Activated CD4-positive, alpha-beta T cell treated with anti-CD3 and anti-CD28 coated beads, Interleukin-2, amount 10 ng/mL, durations not matched to agents 24 days and 14 days (primary cell): ENCODE measurements at regions of chr16 and their contacts with region 1.

Region 1: GRCh38 chr16:67279296-67280089 is at the start of gene PLEKHG4:
- DNase-seq: peak; percentile 95
- H3K4me3 Mint-ChIP-seq: peak within 1 kb of the TSS; percentile 89
- H3K27ac Mint-ChIP-seq: peak within 1 kb of the TSS; percentile 90
- H3K4me1 Mint-ChIP-seq: peaks cover 18% of the 10 kb centered on the region
- H3K27me3 Mint-ChIP-seq: no peaks in the 10 kb centered on the region
- total RNA-seq, gene PLEKHG4: 43.4 and 43.8 TPM in 2 replicates

Region 2: DNA sequence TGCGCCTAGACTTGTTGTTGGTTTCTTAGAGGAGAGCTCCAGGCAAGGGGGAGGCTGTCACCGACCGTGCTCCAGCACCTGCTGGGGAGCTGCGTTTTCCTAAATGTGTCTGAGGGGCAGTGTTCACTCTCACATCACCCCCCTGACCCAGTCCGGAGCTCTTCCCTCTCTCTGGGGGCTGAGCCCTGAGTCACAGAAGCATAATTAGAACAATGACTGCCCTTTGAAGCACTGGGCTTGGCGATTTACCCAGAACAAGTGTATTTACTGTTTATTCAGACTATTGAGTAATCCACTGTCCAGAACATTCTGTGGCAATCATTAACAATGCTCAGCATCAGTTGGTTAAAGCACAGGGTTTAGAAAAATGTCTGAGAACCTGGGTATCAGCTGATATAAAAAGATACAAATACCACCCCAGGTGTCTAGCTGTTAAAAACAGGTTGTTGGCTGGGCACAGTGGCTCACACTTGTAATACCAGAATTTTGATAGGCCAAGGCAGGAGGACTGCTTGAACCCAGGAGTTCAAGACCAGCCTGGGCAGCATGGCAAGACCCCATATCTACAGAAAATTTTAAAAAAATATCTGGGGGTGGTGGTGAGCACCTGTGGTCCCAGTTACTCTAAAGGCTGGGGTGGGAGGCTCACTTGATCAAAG is 283.0 kb before region 1 on chr16:
- intact Hi-C with region 1: no loop called
- DNase-seq: no peak
- H3K4me3 Mint-ChIP-seq: no peak overlapping the region
- H3K27ac Mint-ChIP-seq: no peak overlapping the region
- H3K4me1 Mint-ChIP-seq: peaks cover 17% of the 10 kb centered on the region
- H3K27me3 Mint-ChIP-seq: no peaks in the 10 kb centered on the region

Region 3: DNA sequence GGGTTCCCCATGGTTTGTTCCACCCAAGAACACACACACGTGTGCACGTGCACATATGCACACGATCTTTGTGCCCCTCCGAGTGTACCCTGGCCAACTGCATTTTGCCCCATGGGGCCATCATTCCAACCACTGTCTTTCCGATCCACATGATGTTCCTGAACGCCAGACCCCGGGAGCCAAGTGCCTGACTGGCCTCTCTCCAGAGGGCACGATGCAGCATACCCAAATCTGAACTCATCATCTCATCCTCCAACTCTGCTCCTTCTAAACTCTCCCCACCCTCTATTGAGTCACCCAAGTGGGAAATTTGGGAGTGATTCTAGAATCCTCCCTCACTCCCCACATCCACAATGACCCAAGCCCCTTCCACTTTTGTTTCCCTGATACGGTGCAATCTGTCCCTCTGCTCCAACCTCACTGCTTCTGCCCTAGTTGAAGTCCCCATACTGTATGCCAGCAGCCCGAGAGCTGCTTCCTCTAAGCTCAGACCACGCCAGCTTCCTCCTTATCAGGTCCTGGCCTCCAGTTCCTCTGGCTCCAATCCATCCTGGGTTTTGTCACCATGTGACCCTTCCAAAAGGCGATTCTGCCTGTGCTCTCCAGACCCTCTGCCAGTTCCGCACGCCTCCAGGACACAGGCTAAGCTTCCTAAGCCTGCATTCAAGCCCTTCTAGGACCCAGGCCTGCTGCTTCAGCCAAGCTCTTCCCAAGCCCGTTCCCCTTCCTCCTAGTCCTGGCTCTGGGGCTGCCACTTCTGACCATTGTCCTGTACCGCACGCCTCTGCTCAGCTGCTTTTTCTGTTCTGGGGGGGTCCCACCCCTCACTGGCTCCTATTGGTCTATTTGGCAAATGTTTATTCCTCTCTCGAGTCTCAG is 62.6 kb before region 1 on chr16:
- intact Hi-C with region 1: no loop called
- DNase-seq: no peak
- H3K4me3 Mint-ChIP-seq: no peak overlapping the region
- H3K27ac Mint-ChIP-seq: no peak overlapping the region
- H3K4me1 Mint-ChIP-seq: peaks cover 8% of the 10 kb centered on the region
- H3K27me3 Mint-ChIP-seq: no peaks in the 10 kb centered on the region

Region 4: GRCh38 chr16:67399181-67399733 is 119.8 kb after region 1 on chr16:
- intact Hi-C with region 1: loop called (anchors 5 kb)
- DNase-seq: peak; percentile 87
- H3K4me3 Mint-ChIP-seq: no peak overlapping the region
- H3K27ac Mint-ChIP-seq: no peak overlapping the region
- H3K4me1 Mint-ChIP-seq: peaks cover under 1% of the 10 kb centered on the region
- H3K27me3 Mint-ChIP-seq: peaks cover 18% of the 10 kb centered on the region